HCT116 (cell line): ENCODE measurements at regions of chr2 and their contacts with region 1.

Region 1: GRCh38 chr2:121974897-121975661 is 219.6 kb downstream of the TSN start:
- DNase-seq: peak; percentile 73
- ATAC-seq: peak; percentile 98
- H3K4me3 ChIP-seq: peak overlapping the region in 1 of 2 experiments; percentile 31; a peak in 2 of 4 replicates
- H3K27ac ChIP-seq: no peak overlapping the region
- H3K4me1 ChIP-seq: peaks cover 0 to 3% of the 10 kb centered on the region in 2 experiments; a peak in 1 of 4 replicates
- H3K27me3 ChIP-seq: peaks cover 11% of the 10 kb centered on the region
- CTCF ChIP-seq: peak; percentile 37 to 91 (median 60)
- POLR2A ChIP-seq: no peak
- RAD21 ChIP-seq: peak; percentile 77

Region 2: DNA sequence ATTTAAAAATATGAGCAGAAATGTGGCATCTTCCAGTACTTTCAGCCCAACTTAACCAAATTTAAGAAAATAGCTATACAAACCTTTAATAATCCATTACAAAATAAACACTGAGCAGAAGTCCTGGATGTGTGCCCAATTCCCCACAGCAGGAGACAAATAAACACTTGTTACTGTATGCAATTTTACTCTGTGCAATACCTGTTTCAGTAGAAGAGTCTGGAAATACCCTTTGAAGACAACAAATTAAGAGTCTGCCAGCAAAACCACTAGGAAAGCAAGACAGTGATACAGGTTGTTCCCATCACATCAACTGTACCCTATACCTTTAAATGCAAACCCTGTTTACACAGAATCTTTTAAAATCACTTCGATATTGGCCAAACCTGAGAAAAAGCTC is 485.8 kb before region 1 on chr2:
- CTCF ChIA-PET with region 1: no interaction called
- POLR2A ChIA-PET with region 1: no interaction called
- RAD21 ChIA-PET with region 1: no interaction called
- intact Hi-C with region 1: no loop called
- DNase-seq: no peak
- ATAC-seq: no peak
- H3K4me3 ChIP-seq: no peak overlapping the region
- H3K27ac ChIP-seq: no peak overlapping the region
- H3K4me1 ChIP-seq: peaks cover 7 to 27% of the 10 kb centered on the region in 2 experiments; a peak in 3 of 4 replicates
- H3K27me3 ChIP-seq: no peaks in the 10 kb centered on the region
- CTCF ChIP-seq: no peak
- POLR2A ChIP-seq: no peak
- RAD21 ChIP-seq: no peak

Region 3: GRCh38 chr2:121816797-121817196 is 158.3 kb before region 1 on chr2:
- CTCF ChIA-PET with region 1: no interaction called
- POLR2A ChIA-PET with region 1: no interaction called
- RAD21 ChIA-PET with region 1: no interaction called
- intact Hi-C with region 1: no loop called
- DNase-seq: no peak
- ATAC-seq: no peak
- H3K4me3 ChIP-seq: no peak overlapping the region
- H3K27ac ChIP-seq: no peak overlapping the region
- H3K4me1 ChIP-seq: no peaks in the 10 kb centered on the region
- H3K27me3 ChIP-seq: peaks cover 5% of the 10 kb centered on the region; the same call in 1 of the 2 replicates
- CTCF ChIP-seq: no peak
- POLR2A ChIP-seq: no peak
- RAD21 ChIP-seq: no peak

Region 4: GRCh38 chr2:122136056-122136455 is 161.0 kb after region 1 on chr2:
- CTCF ChIA-PET with region 1: no interaction called
- POLR2A ChIA-PET with region 1: no interaction called
- RAD21 ChIA-PET with region 1: no interaction called
- intact Hi-C with region 1: loop called (anchors 5 kb)
- DNase-seq: peak; percentile 16
- ATAC-seq: peak; percentile 84
- H3K4me3 ChIP-seq: no peak overlapping the region
- H3K27ac ChIP-seq: no peak overlapping the region
- H3K4me1 ChIP-seq: no peaks in the 10 kb centered on the region
- H3K27me3 ChIP-seq: no peaks in the 10 kb centered on the region
- CTCF ChIP-seq: peak; percentile 28 to 80 (median 69); a peak in 5 of 6 replicates
- POLR2A ChIP-seq: no peak
- RAD21 ChIP-seq: peak; percentile 33

Region 5: DNA sequence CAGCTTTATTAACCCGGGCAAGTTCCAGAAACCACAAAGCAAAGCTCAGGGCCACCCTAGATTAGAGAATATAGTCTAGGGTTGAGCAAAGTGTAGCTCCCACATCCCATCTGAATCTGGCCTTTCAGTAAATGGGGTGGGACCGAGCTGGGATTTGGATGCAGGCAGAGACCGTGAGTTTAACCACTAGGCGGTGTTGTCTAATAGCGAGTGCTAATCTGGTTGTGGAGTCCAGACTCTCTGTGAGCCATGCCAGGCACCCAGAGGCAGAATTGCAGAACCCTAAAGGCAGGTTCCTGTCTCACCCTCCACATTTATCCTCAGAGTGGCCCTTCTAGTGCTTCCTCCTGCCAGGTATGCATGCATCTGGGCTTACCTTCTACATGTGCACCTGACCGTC is 216.3 kb after region 1 on chr2:
- CTCF ChIA-PET with region 1: no interaction called
- POLR2A ChIA-PET with region 1: no interaction called
- RAD21 ChIA-PET with region 1: no interaction called
- intact Hi-C with region 1: loop called (anchors 1 kb)
- DNase-seq: peak; percentile 2
- ATAC-seq: peak; percentile 80
- H3K4me3 ChIP-seq: no peak overlapping the region
- H3K27ac ChIP-seq: no peak overlapping the region
- H3K4me1 ChIP-seq: no peaks in the 10 kb centered on the region
- H3K27me3 ChIP-seq: 0 out of 2 replicates have a peak, but pooled peaks cover 11% of the 10 kb centered on the region
- CTCF ChIP-seq: peak; percentile 12 to 57 (median 56); a peak in 4 of 6 replicates
- POLR2A ChIP-seq: no peak
- RAD21 ChIP-seq: peak; percentile 57

Region 6: DNA sequence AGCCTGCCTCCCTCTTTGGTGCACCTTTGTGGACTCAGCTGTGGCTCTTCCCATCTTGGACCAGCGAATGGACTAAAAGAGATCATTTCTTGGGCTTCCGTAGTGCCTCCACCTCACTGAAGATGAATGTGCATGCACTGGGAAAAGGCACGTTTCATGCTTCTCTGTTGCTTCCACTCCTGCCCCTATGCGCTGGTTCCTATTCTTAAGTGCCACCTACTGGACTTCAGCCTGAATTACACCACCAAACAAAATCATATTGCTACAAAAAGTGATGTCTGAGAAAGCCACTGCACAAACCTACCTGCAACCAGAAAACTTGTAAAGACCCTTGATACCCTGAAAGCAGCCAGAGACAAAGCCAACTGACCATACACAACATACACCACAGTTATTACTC is 476.0 kb after region 1 on chr2:
- CTCF ChIA-PET with region 1: no interaction called
- POLR2A ChIA-PET with region 1: no interaction called
- RAD21 ChIA-PET with region 1: no interaction called
- intact Hi-C with region 1: loop called (anchors 2 kb)
- DNase-seq: no peak
- ATAC-seq: no peak
- H3K4me3 ChIP-seq: no peak overlapping the region
- H3K27ac ChIP-seq: no peak overlapping the region
- H3K4me1 ChIP-seq: no peaks in the 10 kb centered on the region
- H3K27me3 ChIP-seq: no peaks in the 10 kb centered on the region
- CTCF ChIP-seq: peak; percentile 12 to 54 (median 38); a peak in 4 of 6 replicates
- POLR2A ChIP-seq: no peak
- RAD21 ChIP-seq: peak; percentile 37